ENCODE measurements at regions of chr14 and their contacts with region 1.

Region 1: DNA sequence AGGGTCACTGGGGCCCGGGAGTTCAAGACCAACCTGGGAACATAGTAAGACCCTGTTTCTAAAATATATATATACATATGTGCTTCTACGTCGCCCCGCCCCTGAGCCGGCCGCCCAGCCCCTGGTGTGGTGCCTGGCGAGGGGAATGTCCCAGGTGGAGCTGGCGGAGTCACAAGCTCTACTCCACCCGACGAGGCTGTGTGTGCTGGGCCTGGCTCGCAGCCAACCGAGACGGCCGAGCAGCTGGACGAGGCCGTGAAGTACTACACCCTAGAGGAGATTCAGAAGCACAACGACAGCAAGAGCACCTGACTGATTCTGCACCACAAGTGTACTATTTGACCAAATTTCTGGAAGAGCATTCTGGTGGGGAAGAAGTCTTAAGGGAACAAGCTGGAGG is 22.1 kb upstream of the ITPK1 start:
- DNase-seq: peak; percentile 77
- ATAC-seq: peak; percentile 73

Region 2: DNA sequence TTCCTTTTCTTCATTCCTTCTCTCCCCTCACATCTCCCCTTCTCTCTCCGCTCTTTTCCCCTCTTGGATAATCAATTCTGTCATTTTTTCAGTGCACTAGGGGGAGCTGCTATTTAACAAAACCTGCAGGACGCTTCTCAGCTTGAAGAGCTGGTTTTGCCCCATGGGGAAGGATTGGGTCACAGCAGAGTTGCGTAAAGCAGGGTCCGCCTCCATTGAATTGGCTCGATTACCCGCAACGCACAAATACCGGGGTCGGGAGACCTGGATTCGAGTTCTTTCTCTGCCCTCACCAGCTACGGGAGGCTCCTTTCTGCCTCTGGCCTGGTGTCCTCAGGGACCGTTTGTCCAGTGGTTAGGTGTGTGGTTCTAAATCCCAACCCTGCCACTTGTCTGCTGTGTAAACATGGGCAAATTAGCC is 257.0 kb before region 1 on chr14:
- intact Hi-C with region 1: loop called (anchors 2 kb)
- DNase-seq: no peak
- ATAC-seq: peak; percentile 43

Measured in Right ventricle myocardium inferior (tissue), 1 donor.